Ovary (tissue), 10 donors: ENCODE measurements at regions of chr9 and their contacts with region 1.

Region 1: DNA sequence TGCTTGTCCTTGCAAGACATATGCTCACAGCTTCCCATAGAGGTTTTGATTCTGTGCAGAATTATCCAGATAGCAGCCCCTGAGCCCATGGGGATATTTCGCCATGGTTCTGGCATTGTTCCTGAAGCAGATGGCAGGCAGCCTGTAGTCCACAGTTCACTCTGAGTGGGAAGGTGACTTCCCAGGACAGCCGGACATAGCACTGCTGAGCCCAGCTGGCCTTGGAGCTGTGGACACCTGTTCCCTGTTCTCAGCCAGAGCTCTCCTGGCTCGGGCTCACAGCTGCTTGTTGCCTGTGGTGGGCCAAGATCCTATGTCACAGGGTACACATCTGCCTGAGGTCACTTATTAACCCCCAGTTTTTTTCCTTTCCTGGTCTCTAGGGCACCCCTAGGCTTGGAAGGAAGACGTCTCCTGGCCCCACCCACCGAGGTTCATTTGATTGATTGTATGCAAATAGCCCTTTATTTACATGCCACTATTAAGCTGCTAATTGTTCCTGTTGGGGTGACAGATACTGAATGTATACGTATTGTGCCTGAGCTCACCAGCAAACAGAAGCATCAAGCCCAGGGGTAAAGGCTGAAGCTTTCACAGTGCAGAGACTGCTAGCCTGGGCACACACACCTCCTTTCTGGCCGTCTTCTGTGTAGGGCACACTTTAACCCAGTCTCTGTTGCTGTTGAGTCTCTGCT is 96.6 kb upstream of the DMRT1 start:
- DNase-seq: peak; percentile 62 to 75 (median 69)
- H3K4me3 ChIP-seq: no peak overlapping the region
- H3K27ac ChIP-seq: peak overlapping the region in 1 of 2 donors; percentile 32
- H3K4me1 ChIP-seq: peaks cover 11% of the 10 kb centered on the region
- H3K27me3 ChIP-seq: no peaks in the 10 kb centered on the region
- CTCF ChIP-seq: no peak
- EP300 ChIP-seq: no peak
- POLR2A ChIP-seq: no peak

Region 2: DNA sequence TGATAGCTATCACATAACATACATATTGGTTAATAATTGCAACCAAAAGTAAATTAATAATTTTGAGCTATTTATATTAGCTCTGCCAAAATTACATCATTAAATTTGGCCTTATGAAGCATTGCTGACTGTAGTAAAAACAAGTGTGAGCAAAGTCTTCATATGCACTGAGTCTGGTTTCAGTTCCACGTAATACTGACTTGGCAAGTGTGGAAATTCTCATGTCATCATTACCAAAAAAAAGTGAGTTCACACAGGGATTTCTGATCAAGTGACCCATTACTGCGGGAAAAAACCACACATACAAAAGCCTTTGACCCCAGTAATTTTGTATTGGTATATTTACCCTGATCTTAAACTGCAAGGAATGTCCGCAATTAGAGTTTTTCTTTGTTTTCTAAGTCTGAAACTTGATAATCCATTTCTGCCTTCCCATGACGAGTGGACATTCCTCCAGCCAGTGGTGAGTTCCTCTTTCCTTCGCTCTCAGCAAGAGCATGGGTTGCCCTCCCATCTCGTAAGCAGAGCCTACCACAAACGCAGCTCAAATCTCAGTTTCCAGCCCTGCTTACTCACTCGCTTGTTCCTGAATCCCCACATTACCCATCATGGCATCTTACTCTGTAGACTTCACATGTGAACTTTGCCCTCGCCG is 123.6 kb before region 1 on chr9:
- intact Hi-C with region 1: no loop called
- DNase-seq: no peak
- H3K4me3 ChIP-seq: no peak overlapping the region
- H3K27ac ChIP-seq: no peak overlapping the region
- H3K4me1 ChIP-seq: peaks cover 4% of the 10 kb centered on the region
- H3K27me3 ChIP-seq: no peaks in the 10 kb centered on the region
- CTCF ChIP-seq: no peak
- EP300 ChIP-seq: no peak
- POLR2A ChIP-seq: no peak

Region 3: DNA sequence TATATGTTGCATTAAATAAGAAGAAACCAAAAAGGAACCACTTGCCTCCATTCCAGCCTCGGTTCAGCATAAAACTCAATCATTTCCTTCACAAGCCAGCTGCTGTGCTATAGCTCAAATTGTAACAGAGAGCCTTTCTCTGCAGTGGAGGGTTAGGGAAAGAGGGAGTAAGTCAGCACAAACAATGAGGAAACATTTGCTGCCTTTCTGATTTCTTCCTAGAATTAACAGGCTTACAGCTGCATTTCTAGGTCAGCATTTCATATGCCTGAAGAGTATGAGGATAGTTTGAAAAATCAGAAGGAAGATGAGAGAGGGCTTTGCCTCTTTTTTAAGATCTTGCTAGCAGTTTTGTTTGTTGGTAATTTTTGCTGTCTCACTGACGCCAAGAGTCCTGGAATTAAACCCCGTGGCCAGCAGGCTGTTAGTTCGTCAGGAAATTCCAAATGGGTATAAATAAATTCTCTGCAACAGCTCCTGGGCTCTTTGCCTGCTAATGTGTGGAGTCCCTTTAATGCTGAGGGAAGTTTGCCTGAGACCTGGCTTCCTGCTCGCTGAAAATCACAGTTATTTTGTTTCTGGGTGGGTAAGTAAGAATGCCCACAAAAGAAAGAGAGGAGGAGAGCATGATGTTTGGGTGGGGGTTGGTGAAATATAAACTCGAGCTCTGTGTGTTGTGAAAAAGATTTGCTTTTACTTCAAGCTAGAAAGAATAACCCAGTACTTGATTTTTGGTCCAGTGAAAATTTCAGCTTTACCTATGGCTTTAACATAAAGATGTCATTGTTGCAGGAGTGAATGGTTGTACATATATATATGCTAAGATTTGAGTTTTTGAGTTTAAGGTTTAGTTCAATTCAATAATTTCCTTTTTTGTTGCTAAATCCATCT is 51.5 kb before region 1 on chr9:
- intact Hi-C with region 1: loop called in 2 of 4 experiments (anchors 5 kb)
- DNase-seq: peak; percentile 52 to 59 (median 58)
- H3K4me3 ChIP-seq: peak overlapping the region; percentile 17
- H3K27ac ChIP-seq: peak overlapping the region; percentile 13 to 85
- H3K4me1 ChIP-seq: peaks cover 31% of the 10 kb centered on the region
- H3K27me3 ChIP-seq: no peaks in the 10 kb centered on the region
- CTCF ChIP-seq: no peak
- EP300 ChIP-seq: peak; percentile 28
- POLR2A ChIP-seq: no peak

Region 4: GRCh38 chr9:706606-707459 is 38.1 kb before region 1 on chr9:
- intact Hi-C with region 1: loop called in 1 of 4 experiments (anchors 5 kb)
- DNase-seq: peak; percentile 78 to 85 (median 81)
- H3K4me3 ChIP-seq: peak overlapping the region; percentile 59
- H3K27ac ChIP-seq: peak overlapping the region; percentile 64 to 69
- H3K4me1 ChIP-seq: peaks cover 4% of the 10 kb centered on the region
- H3K27me3 ChIP-seq: no peaks in the 10 kb centered on the region
- CTCF ChIP-seq: no peak
- EP300 ChIP-seq: no peak
- POLR2A ChIP-seq: no peak